ENCODE measurements at regions of chr1 and their contacts with region 1.

Region 1: DNA sequence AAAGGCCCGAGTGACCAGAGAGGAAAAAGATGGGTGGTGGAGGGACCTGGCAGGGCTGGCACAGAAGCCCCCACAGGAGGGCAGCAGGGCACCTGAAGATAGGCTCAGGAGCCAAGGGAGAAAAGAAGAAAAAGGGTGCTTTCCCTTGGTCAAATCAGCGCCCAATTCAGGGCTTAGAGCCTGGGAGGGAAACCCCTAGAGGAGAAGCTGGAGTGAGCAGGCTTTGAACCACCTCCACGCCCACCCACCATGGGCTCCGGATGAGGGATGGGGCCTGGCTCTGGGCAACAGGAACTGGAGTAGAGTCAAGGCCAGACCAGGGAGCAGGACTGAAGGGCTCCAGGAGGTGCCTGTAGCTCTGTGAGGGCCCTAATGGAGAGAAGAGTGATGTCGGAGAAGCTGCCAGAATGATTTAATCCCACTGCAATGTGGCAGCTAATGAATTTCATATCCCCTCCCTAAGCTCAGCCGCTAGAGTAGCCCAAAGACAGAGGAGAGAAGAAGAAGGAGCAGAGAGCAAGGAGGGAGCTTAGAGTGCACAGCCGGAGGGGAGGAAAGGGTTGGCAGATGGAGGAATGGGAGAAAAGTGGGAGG is 12.0 kb upstream of the PRELP start:
- DNase-seq: no peak
- H3K4me3 ChIP-seq: no peak overlapping the region
- CTCF ChIP-seq: peak; percentile 21

Region 2: GRCh38 chr1:203428981-203429599 is 34.5 kb before region 1 on chr1:
- CTCF ChIA-PET with region 1: no interaction called
- POLR2A ChIA-PET with region 1: no interaction called
- DNase-seq: no peak
- H3K4me3 ChIP-seq: no peak overlapping the region
- CTCF ChIP-seq: no peak

Region 3: GRCh38 chr1:203475012-203475981 is 11.7 kb after region 1 on chr1 and contains the start of gene PRELP:
- CTCF ChIA-PET with region 1: interaction called, 32 read pairs
- POLR2A ChIA-PET with region 1: interaction called, 7 read pairs
- DNase-seq: no peak
- H3K4me3 ChIP-seq: peak within 1 kb of the TSS; percentile 50
- CTCF ChIP-seq: peak; percentile 33

Measured in AG04449 (cell line).